CD8-positive, alpha-beta T cell (primary cell): ENCODE measurements at regions of chr10 and their contacts with region 1.

Region 1: DNA sequence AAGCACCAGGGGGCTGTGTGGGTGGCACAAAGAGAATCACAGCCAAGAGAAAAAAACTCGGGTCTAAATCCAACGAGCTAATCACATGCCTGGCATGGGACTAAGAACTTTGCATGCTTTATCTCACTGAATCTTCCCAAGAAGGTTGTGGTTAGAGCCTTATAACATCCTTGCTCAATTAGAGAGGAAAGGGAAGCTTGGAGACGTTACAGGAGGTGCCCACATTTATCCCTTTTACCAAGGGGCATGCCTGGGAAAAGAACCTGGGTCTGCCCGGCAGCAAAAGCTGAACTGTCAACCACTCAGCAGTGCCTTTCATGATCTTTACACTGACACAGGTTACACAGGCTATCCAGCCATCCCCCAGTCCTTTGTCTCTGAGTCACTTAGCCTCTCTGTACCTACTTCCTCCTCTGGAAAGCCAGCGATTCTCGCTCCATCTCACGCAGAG is 190.1 kb downstream of the PRPF18 start:
- DNase-seq: no peak
- ATAC-seq: no peak
- H3K4me3 ChIP-seq: no peak overlapping the region
- H3K4me3 Mint-ChIP-seq: no peak overlapping the region
- H3K27ac ChIP-seq: no peak overlapping the region
- H3K27ac Mint-ChIP-seq: no peak overlapping the region
- H3K4me1 ChIP-seq: peaks cover 4% of the 10 kb centered on the region
- H3K4me1 Mint-ChIP-seq: peaks cover 2% of the 10 kb centered on the region
- H3K27me3 ChIP-seq: peaks cover 0 to 3% of the 10 kb centered on the region in 2 experiments
- H3K27me3 Mint-ChIP-seq: peaks cover 14% of the 10 kb centered on the region
- CTCF ChIP-seq: no peak

Region 2: GRCh38 chr10:13160934-13161856 is 615.7 kb before region 1 on chr10 and contains the start of gene MCM10:
- CTCF ChIA-PET with region 1: no interaction called
- POLR2A ChIA-PET with region 1: no interaction called
- intact Hi-C with region 1: loop called (anchors 5 kb)
- DNase-seq: peak; percentile 93 to 99 (median 98)
- ATAC-seq: peak; percentile 100
- H3K4me3 ChIP-seq: peak within 1 kb of the TSS; percentile 44 to 49
- H3K4me3 Mint-ChIP-seq: peak within 1 kb of the TSS; percentile 88
- H3K27ac ChIP-seq: peak within 1 kb of the TSS in 1 of 2 experiments; percentile 40
- H3K27ac Mint-ChIP-seq: peak within 1 kb of the TSS; percentile 86
- H3K4me1 ChIP-seq: peaks cover 10% of the 10 kb centered on the region
- H3K4me1 Mint-ChIP-seq: peaks cover 14% of the 10 kb centered on the region
- H3K27me3 ChIP-seq: no peaks in the 10 kb centered on the region
- H3K27me3 Mint-ChIP-seq: no peaks in the 10 kb centered on the region
- CTCF ChIP-seq: peak; percentile 96
- total RNA-seq, gene MCM10: 0.08 to 0.19 TPM

Region 3: GRCh38 chr10:13371897-13372470 is 404.9 kb before region 1 on chr10:
- CTCF ChIA-PET with region 1: interaction called, 3 read pairs
- POLR2A ChIA-PET with region 1: no interaction called
- intact Hi-C with region 1: loop called in 1 of 2 experiments (anchors 1 kb)
- DNase-seq: peak; percentile 6 to 85 (median 65)
- ATAC-seq: peak; percentile 100
- H3K4me3 ChIP-seq: no peak overlapping the region
- H3K4me3 Mint-ChIP-seq: no peak overlapping the region
- H3K27ac ChIP-seq: no peak overlapping the region
- H3K27ac Mint-ChIP-seq: no peak overlapping the region
- H3K4me1 ChIP-seq: no peaks in the 10 kb centered on the region
- H3K4me1 Mint-ChIP-seq: peaks cover 4% of the 10 kb centered on the region
- H3K27me3 ChIP-seq: no peaks in the 10 kb centered on the region
- H3K27me3 Mint-ChIP-seq: peaks cover 7% of the 10 kb centered on the region
- CTCF ChIP-seq: peak; percentile 93

Region 4: DNA sequence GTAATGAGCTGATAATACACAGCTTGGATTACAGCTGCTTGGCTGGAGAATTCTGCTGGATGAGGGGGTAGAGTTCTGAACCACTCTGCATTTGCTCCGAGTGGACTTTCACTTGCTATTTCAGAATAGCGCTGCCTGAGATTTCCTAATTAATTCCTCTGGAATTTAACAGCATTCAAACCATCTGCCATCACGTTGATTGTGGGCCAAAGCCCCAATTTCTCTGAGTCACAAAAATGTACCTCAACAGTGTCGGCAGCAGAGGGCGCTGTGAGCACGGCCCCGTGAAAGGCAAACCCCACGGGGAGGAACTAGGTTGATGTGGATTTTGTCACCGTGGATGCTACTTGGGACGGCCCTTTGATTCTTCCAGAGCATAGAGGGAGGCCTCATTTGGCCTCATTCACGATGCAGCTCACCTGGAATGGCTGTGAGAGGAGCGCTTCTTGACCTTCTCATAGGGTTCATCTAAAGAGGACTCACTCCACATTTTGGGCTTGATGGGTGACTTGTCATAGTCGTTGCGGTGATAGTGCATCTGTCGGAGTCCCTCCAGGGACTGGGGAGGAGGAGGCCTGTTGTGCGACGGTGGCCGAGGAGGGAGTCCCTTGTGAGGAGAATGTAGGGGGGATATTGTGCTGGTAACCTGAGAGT is 116.9 kb before region 1 on chr10:
- CTCF ChIA-PET with region 1: interaction called, 15 read pairs
- POLR2A ChIA-PET with region 1: no interaction called
- intact Hi-C with region 1: loop called in 1 of 2 experiments (anchors 1 kb)
- DNase-seq: peak; percentile 43 to 77 (median 69)
- ATAC-seq: peak; percentile 79
- H3K4me3 ChIP-seq: no peak overlapping the region
- H3K4me3 Mint-ChIP-seq: peak overlapping the region; percentile 4
- H3K27ac ChIP-seq: no peak overlapping the region
- H3K27ac Mint-ChIP-seq: no peak overlapping the region
- H3K4me1 ChIP-seq: peaks cover 16% of the 10 kb centered on the region
- H3K4me1 Mint-ChIP-seq: peaks cover 24% of the 10 kb centered on the region
- H3K27me3 ChIP-seq: no peaks in the 10 kb centered on the region
- H3K27me3 Mint-ChIP-seq: no peaks in the 10 kb centered on the region
- CTCF ChIP-seq: peak; percentile 94

Region 5: DNA sequence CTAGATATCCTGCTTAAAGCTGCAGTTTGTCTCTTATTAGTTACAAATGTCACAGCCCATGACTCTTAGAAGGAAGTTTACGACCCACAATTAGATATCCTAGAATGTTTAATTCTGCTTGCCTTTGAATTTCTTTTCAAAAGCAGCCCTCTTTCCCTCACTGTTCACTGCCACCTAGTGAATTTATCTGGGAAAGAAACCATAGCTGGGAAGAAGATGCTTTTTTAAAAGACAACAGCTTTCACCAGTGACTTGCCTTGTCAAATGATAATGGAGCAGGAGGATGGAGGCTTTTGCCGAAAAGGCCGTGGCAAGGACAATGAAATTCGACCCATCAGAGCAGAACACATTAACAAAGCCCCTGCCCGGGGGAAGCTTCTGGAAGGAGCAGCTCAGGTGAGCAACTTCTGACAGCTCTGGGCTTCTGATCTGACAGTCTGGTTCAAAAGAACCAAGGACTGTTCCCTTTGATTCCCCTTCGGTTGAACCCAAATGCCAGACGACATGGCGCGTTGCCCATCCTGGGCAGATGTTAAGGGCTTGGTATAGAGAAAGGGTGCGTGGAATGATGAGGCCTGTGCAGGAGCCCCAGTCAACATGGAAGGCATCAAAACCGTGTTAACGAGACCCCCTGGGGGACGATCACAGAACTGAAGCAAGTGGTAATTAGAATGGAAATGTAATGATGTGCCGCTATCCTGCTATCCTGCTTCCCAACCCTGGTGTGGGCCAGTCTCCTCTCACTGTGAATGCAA is 317.0 kb after region 1 on chr10:
- CTCF ChIA-PET with region 1: interaction called, 4 read pairs
- POLR2A ChIA-PET with region 1: no interaction called
- intact Hi-C with region 1: loop called in 1 of 2 experiments (anchors 10 kb)
- DNase-seq: peak in 1 of 9 experiments; percentile 15
- ATAC-seq: no peak
- H3K4me3 ChIP-seq: no peak overlapping the region
- H3K4me3 Mint-ChIP-seq: no peak overlapping the region
- H3K27ac ChIP-seq: no peak overlapping the region
- H3K27ac Mint-ChIP-seq: no peak overlapping the region
- H3K4me1 ChIP-seq: no peaks in the 10 kb centered on the region
- H3K4me1 Mint-ChIP-seq: no peaks in the 10 kb centered on the region
- H3K27me3 ChIP-seq: no peaks in the 10 kb centered on the region
- H3K27me3 Mint-ChIP-seq: no peaks in the 10 kb centered on the region
- CTCF ChIP-seq: peak; percentile 25